ENCODE measurements at regions of chr19 and their contacts with region 1.

Region 1: DNA sequence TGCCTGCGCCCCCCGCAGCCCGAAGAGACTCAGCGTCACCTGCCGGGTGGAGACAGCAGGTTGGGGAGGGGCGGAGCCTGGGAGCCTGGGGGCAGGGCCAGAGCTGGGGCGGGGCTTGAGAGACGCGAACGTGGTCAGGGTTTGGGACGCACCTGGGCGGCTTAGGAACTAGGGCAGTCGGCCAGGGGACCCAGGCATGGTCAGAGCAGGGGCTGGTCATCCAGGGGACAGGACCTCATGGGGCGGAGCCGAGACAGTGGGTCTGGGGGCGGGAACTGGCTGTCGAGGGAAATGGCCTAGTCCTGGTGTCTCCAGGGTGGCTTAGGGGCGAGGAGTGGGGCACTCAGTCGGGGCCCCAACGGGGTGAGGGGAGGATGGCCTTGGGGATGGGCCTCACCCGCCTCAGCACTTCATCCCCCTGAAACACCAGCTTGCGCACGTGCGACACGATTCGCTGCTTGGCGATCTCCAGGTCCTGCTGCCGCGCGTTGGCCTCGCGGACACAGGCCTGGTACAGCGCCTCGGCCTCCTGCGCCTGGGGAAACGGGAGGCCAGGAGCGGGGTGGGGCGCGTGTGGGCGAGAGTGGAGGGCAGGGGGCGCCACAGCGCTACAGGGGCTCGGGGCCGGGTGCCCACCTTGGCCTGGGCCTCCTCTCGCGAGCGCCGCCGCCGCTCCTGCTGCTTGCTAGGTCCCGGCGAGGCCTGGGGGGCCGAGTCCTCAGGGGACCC is 5.8 kb downstream of the GMIP start:
- DNase-seq: no peak

Region 2: GRCh38 chr19:19540715-19541440 is 96.8 kb before region 1 on chr19:
- intact Hi-C with region 1: no loop called
- DNase-seq: no peak

Region 3: DNA sequence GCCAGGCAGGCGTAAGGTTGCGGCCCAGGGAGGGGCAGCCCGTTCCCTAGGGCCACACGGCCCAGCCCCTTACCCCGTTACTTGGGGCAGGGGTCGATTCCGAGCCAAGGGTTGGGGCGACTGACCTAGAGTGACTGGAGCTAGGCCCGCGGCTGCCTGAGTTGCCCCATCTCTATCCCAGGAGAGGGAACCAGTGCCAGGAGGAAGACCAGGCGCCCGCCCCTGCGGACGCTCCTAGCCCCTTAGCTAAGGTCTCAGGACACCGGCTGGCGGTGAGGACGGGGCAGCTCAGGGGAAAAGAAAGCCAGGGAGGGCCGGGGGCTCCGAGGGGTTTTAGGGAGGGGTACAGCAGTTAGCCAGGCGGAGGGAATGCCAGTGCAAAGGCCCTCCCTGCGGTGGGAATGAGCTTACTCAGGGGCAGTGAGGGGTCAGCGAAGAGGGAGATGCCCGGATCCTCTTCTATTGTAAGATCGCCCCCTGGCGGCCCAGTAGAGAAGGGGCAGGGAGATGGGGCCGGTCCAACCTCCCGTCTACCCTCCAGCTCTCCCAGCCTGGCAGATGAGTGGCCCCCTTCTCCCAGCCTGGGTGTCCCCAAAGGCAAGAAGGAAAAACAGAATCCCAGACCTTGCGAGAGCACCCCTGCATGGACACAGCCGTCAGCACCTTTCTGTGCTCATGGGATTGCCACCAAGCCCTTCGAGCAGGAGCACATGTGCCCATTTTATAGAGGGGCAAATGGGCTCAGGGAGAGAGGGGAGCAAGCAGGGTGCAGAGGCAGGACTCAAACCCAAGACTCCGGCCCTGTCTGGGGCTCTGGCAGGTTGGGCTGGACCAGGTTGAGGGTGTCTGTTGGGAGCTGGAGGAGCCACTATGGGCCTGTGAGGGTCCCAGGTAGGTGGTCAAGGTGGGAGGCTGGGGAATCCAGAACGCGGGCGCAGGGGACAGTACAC is 83.3 kb before region 1 on chr19:
- intact Hi-C with region 1: loop called in 1 of 2 experiments (anchors 10 kb)
- DNase-seq: no peak

Region 4: DNA sequence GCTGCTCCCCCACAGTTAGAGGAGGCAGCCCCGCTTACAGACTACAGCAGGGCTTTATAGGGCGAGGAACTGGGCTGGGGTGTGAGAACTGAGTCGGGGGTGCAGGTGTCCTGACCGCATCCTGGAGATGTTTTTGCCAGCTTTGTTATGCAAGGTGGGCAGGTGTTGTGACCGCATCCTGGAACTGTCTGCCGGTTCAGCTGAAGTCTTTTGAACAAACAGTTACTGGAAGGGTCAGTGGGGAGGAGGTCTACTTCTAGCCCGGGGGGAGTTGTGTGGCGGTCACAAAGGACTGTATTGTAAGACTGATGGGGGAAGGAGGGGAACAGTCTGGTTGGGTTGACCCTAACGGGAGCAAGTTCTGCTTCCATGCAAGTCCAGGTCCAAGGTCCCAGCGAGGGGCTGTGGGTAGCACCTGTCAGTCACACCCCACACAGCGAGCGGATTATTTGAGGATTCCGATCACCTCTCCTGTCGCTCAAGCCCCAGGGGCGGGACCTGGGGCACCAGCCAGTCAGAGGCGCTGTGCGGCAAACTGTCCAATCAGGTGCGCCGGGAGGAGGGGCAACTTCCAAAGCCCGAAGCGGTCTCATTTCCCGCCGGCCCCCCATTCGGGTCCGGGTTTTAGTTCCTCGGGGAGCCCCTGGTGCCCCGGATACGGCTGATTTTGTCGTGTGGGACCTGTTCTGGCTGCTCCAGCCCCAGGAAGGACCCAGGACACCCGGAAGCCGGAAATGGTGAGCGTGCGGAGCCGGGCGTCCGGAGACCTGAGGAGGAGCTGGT is 30.7 kb after region 1 on chr19 and contains the start of gene ZNF101:
- intact Hi-C with region 1: no loop called
- DNase-seq: peak; percentile 98
- total RNA-seq, gene ZNF101: 6.3 to 8.2 TPM